ENCODE measurements at regions of chr1 and their contacts with region 1.

Region 1: GRCh38 chr1:50724626-50725286 is 235.3 kb downstream of the FAF1 start:
- DNase-seq: no peak
- ATAC-seq: peak; percentile 75
- H3K4me3 Mint-ChIP-seq: no peak overlapping the region
- H3K27ac Mint-ChIP-seq: peak overlapping the region; percentile 62
- H3K4me1 Mint-ChIP-seq: peaks cover 42% of the 10 kb centered on the region
- H3K27me3 Mint-ChIP-seq: no peaks in the 10 kb centered on the region
- CTCF ChIP-seq: no peak

Region 2: GRCh38 chr1:50193002-50193401 is 531.8 kb before region 1 on chr1:
- CTCF ChIA-PET with region 1: no interaction called
- POLR2A ChIA-PET with region 1: no interaction called
- intact Hi-C with region 1: no loop called
- DNase-seq: no peak
- ATAC-seq: no peak
- H3K4me3 Mint-ChIP-seq: no peak overlapping the region
- H3K27ac Mint-ChIP-seq: no peak overlapping the region
- H3K4me1 Mint-ChIP-seq: no peaks in the 10 kb centered on the region
- H3K27me3 Mint-ChIP-seq: peaks cover 2% of the 10 kb centered on the region
- CTCF ChIP-seq: no peak

Region 3: DNA sequence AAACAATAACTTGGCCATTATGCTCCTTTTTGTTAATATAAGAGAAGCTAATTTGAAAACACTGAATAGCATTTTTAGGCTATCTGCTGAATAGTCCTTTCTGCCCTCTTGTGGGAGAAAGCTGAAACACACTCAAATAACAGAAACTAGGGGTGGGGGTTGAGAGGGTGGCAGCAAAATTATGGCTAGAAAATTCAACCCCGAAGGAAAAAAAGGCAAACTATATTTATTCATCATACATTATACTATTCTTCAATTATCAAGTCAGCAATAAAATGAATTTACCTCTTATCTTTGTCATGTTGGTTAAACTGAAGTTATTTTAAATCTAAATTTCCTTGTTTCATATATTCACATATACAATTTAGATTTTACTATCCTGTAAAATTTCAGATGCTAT is 20.6 kb before region 1 on chr1:
- CTCF ChIA-PET with region 1: interaction called, 4 read pairs
- POLR2A ChIA-PET with region 1: no interaction called
- intact Hi-C with region 1: loop called (anchors 2 kb)
- DNase-seq: no peak
- ATAC-seq: no peak
- H3K4me3 Mint-ChIP-seq: no peak overlapping the region
- H3K27ac Mint-ChIP-seq: no peak overlapping the region
- H3K4me1 Mint-ChIP-seq: peaks cover 4% of the 10 kb centered on the region
- H3K27me3 Mint-ChIP-seq: no peaks in the 10 kb centered on the region
- CTCF ChIP-seq: peak; percentile 69

Region 4: GRCh38 chr1:50829014-50829958 is 104.5 kb after region 1 on chr1:
- CTCF ChIA-PET with region 1: no interaction called
- POLR2A ChIA-PET with region 1: no interaction called
- intact Hi-C with region 1: no loop called
- DNase-seq: no peak
- ATAC-seq: no peak
- H3K4me3 Mint-ChIP-seq: no peak overlapping the region
- H3K27ac Mint-ChIP-seq: no peak overlapping the region
- H3K4me1 Mint-ChIP-seq: no peaks in the 10 kb centered on the region
- H3K27me3 Mint-ChIP-seq: no peaks in the 10 kb centered on the region
- CTCF ChIP-seq: no peak

Region 5: DNA sequence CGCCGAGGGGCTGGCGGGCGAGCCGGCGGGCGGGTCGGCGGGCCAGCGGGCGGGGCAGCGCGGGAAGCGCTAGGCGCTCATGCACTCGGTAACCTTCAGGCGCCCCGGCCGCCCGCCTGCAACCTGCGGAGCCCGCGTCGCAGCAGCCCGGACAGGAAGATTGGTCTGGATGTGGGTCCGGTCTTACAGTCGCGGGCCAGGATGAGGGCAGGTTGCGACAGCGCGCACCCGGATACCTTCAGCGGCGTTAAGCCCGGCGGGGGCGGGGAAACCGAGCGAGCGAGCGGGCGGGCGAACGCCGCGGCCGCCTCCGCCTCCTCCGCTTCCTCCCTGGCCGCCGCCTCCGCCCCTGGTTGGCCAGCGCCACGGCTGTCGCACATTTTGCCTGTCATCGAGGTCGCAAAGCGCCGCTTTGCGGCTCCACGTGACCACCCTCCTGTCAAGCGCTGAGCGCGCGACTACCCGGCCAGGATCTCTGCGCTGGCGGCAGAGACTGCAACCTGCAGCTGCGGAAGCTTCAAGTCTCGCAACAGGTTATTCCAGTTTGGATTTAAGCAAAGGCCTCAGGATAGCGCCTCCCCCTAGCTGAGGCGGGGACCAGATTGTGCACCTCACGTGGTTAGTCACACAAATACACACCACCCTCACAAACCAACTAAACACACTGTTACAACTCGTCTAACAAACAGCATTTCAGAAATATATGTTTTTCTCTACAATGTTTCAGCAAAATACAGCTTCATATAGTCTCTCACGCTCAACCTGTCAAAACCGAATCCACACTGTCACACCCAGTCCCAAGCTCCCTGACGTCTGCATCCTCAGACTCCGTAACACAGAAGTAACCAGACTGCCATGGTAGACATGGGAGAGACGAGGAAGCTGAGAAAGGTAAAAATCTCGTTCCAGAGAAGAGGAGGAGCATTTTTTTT is 235.4 kb after region 1 on chr1 and contains the start of gene FAF1:
- CTCF ChIA-PET with region 1: no interaction called
- POLR2A ChIA-PET with region 1: no interaction called
- intact Hi-C with region 1: no loop called
- DNase-seq: peak; percentile 98
- ATAC-seq: peak; percentile 90
- H3K4me3 Mint-ChIP-seq: peak within 1 kb of the TSS; percentile 93
- H3K27ac Mint-ChIP-seq: peak within 1 kb of the TSS; percentile 95
- H3K4me1 Mint-ChIP-seq: peaks cover 23% of the 10 kb centered on the region
- H3K27me3 Mint-ChIP-seq: no peaks in the 10 kb centered on the region
- CTCF ChIP-seq: no peak
- total RNA-seq, gene FAF1: 57.2 and 61.7 TPM in 2 replicates